Tibial artery (tissue), 4 donors: ENCODE measurements at regions of chr2 and their contacts with region 1.

Region 1: GRCh38 chr2:23497063-23497462 is 112.1 kb downstream of the KLHL29 start:
- DNase-seq: peak; percentile 64 to 78
- H3K4me3 ChIP-seq: no peak overlapping the region
- H3K27ac ChIP-seq: peak overlapping the region; percentile 57 to 71
- H3K4me1 ChIP-seq: peaks cover 0 to 51% (median 45%) of the 10 kb centered on the region in 4 donors
- H3K27me3 ChIP-seq: no peaks in the 10 kb centered on the region
- CTCF ChIP-seq: no peak

Region 2: GRCh38 chr2:23513872-23514793 is 17.1 kb after region 1 on chr2:
- intact Hi-C with region 1: loop called (anchors 2 kb)
- DNase-seq: no peak
- H3K4me3 ChIP-seq: no peak overlapping the region
- H3K27ac ChIP-seq: peak overlapping the region; percentile 9 to 30
- H3K4me1 ChIP-seq: peaks cover 0 to 18% (median 13%) of the 10 kb centered on the region in 4 donors
- H3K27me3 ChIP-seq: no peaks in the 10 kb centered on the region
- CTCF ChIP-seq: no peak

Region 3: GRCh38 chr2:23595601-23596251 is 98.7 kb after region 1 on chr2:
- intact Hi-C with region 1: no loop called
- DNase-seq: peak in 1 of 2 donors; percentile 81
- H3K4me3 ChIP-seq: peak overlapping the region; percentile 1 to 10
- H3K27ac ChIP-seq: peak overlapping the region; percentile 63 to 75
- H3K4me1 ChIP-seq: peaks cover 0 to 34% (median 16%) of the 10 kb centered on the region in 4 donors
- H3K27me3 ChIP-seq: no peaks in the 10 kb centered on the region
- CTCF ChIP-seq: no peak